ENCODE measurements at regions of chr14 and their contacts with region 1.

Region 1: DNA sequence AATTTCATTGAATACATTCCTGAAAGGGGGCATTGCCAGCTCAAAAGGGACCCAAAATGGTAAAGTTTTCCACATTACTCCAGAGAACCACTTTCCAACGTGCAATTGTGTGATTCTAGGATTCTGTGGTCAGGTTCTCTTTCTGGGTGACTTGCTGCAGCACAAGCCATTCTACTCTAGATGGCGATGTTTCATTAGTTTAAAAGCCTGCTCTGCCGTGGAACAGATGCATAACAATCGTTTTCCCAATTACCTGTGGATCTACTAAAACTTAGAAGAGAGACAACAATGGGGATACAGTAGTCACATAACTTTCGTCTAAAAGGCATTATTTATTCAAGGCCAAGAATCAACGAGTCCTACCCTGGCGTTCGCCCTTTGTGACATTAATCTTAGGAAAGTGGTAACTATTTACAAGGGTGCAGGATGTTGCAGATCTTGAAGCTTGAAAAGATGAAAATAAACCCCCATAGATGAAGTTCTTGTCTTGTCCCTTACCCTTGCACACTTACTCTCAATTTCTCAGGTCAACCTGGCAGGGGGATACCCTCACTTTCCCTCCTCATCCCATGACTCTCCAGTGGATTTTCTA is 400.9 kb downstream of the SNAPC1 start:
- DNase-seq: peak; percentile 43
- CTCF ChIP-seq: peak; percentile 67

Region 2: DNA sequence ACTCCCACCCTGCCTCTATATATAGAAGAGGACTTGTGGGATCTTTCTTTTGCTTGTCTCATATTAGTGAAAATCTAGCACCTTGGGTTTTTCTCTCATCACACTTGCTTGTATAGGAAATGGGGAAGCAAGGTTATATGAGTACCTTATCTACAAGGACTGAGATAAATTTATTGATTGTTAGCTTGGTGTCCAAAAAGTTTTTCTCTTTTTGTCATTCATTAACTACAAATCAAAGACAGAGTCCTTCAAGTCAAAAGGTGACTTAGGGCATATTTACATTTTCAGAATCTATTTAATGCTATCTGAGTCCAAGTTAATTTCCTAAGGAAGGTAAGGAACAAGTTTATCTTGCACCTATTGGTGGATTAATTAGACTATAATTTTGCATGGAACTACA is 308.2 kb before region 1 on chr14:
- in situ Hi-C with region 1: no loop called
- DNase-seq: no peak
- CTCF ChIP-seq: no peak

Region 3: DNA sequence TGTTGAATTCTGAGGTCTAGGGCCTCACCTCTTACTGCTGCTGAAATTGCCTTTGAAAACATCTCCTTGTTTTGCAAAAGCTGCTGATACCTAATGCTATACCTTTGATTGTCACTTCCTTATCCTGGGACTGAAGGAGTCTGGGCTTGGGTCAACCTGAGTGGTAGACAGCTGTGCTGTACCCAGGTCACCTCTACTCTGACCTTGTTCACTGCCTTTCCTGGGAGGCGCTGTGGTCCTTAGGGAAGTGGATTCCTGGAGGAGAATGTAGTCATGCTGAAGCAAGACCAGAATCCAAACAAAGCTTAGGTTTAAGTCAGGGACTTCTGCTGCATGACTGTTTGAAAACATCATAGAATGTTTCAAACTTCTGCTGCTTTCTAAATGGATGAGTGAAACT is 209.5 kb before region 1 on chr14:
- in situ Hi-C with region 1: no loop called
- DNase-seq: no peak
- CTCF ChIP-seq: no peak

Region 4: DNA sequence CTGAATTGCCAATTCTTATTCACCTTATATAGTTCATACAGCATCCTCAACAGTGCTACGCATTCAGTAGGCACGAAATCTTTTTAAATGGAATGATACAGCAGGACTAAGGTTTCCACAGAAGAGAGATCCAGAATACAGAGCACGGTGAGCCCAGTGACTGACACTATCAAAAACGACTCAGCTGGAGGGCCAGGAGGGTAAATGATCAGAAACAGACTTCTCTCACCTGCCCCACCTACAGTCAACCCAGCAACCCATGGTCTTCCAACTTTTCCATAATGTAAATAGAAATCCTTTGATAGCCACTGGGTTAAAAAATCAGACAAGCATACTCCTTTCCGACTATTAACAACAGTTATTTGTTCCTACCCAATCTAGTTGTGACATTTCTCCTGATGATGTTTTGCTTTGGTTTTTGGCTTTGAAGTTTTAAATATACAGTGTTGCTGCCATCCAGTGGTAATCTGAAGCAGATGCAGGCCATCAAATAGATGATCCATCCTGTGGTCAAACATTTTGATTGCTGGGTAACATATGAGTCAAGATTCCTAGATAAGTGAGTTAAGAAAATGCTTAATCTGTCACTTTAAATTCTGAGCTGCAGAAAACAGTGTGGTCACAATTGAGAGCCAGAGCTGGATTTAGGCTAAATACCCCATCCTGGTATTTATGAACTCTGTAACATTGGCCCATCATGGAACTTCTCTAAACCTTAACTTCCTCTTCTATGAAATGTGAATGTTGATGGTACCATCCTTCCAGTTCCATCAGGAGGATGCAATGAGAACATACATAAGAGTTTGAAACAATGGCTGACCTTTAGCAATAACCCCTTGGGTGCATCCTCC is 1113.6 kb after region 1 on chr14:
- in situ Hi-C with region 1: loop called (anchors 10 kb)
- DNase-seq: peak; percentile 59
- CTCF ChIP-seq: peak; percentile 80

Measured in GM13976 (cell line).